Heart left ventricle (tissue), 16 donors: ENCODE measurements at regions of chr14 and their contacts with region 1.

Region 1: DNA sequence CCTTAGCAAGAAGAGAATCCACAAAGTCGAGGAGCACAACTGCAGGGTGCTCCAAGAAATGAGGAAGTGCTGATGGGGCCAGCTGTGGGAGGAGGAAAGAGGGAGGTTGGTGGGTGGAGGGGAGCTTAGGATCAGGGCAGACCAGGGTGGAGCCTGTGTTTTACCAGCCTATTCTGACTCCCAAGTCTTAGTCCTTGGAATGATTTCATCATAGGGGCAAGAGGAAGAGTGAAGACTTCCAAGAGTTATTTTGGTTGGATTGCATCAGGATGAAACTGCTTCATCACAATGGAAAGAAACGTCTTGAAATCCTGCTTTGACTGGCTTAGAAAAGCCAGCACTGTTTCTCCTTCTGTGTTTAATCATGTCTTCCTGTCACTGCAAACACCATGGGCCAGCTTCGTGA is 194.0 kb downstream of the DPF3 start:
- DNase-seq: peak in 1 of 5 donors; percentile 69
- ATAC-seq: peak in 3 of 4 donors; percentile 49 to 64 (median 54)
- H3K4me3 ChIP-seq: no peak overlapping the region
- H3K27ac ChIP-seq: peak overlapping the region in 4 of 12 donors; percentile 26 to 54 (median 44)
- H3K4me1 ChIP-seq: peaks cover 0 to 53% (median 22%) of the 10 kb centered on the region in 12 donors
- H3K27me3 ChIP-seq: no peaks in the 10 kb centered on the region
- CTCF ChIP-seq: no peak
- POLR2A ChIP-seq: no peak

Region 2: GRCh38 chr14:72788972-72789728 is 89.3 kb after region 1 on chr14:
- intact Hi-C with region 1: loop called in 1 of 10 experiments (anchors 5 kb)
- DNase-seq: no peak
- ATAC-seq: peak in 1 of 4 donors; percentile 17
- H3K4me3 ChIP-seq: no peak overlapping the region
- H3K27ac ChIP-seq: peak overlapping the region in 7 of 12 donors; percentile 1 to 87 (median 77)
- H3K4me1 ChIP-seq: peaks cover 0 to 71% (median 28%) of the 10 kb centered on the region in 12 donors
- H3K27me3 ChIP-seq: no peaks in the 10 kb centered on the region
- CTCF ChIP-seq: no peak
- POLR2A ChIP-seq: no peak